CD4-positive, alpha-beta T cell (primary cell): ENCODE measurements at regions of chr15 and their contacts with region 1.

Region 1: DNA sequence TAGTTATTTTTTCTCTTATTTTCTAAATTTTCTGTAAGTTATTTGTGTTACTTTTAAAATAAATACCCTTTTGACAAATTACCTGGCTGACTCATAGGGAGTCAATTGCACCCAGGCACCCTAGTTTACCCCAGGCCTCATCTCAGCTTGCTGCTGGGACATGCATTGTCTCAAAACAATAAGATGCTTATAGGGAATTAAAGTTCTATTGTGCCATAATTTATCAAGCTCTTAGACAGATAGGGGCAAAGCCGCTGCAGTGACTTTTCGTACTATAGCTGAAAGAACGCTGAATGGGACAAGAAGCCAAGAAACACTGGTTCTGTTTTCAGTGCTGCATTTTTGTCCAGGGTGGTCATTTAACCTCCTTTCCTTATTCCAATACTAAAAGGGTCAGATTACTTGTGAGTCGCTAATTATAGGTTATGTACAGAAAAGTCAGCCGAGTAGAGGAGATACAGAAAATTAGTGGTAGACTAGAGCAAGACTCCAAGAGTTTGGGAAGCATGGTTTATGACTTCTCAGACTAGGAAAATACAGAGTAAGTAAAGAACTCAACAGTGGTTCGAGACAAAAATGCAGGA is 50.3 kb downstream of the EXD1 start:
- DNase-seq: no peak
- ATAC-seq: no peak
- H3K4me3 ChIP-seq: no peak overlapping the region
- H3K4me3 Mint-ChIP-seq: no peak overlapping the region
- H3K27ac ChIP-seq: no peak overlapping the region
- H3K27ac Mint-ChIP-seq: no peak overlapping the region
- H3K4me1 ChIP-seq: no peaks in the 10 kb centered on the region
- H3K4me1 Mint-ChIP-seq: no peaks in the 10 kb centered on the region
- H3K27me3 ChIP-seq: peaks cover 0 to 3% of the 10 kb centered on the region in 2 experiments
- H3K27me3 Mint-ChIP-seq: peaks cover 5% of the 10 kb centered on the region
- CTCF ChIP-seq: no peak

Region 2: GRCh38 chr15:40857601-40858341 is 322.5 kb before region 1 on chr15:
- CTCF ChIA-PET with region 1: interaction called, 7 read pairs
- POLR2A ChIA-PET with region 1: no interaction called
- intact Hi-C with region 1: loop called (anchors 1 to 2 kb)
- DNase-seq: peak; percentile 63 to 87 (median 77)
- ATAC-seq: peak; percentile 96
- H3K4me3 ChIP-seq: no peak overlapping the region
- H3K4me3 Mint-ChIP-seq: no peak overlapping the region
- H3K27ac ChIP-seq: no peak overlapping the region
- H3K27ac Mint-ChIP-seq: no peak overlapping the region
- H3K4me1 ChIP-seq: peaks cover 18% of the 10 kb centered on the region
- H3K4me1 Mint-ChIP-seq: peaks cover 14% of the 10 kb centered on the region
- H3K27me3 ChIP-seq: no peaks in the 10 kb centered on the region
- H3K27me3 Mint-ChIP-seq: no peaks in the 10 kb centered on the region
- CTCF ChIP-seq: peak; percentile 85

Region 3: DNA sequence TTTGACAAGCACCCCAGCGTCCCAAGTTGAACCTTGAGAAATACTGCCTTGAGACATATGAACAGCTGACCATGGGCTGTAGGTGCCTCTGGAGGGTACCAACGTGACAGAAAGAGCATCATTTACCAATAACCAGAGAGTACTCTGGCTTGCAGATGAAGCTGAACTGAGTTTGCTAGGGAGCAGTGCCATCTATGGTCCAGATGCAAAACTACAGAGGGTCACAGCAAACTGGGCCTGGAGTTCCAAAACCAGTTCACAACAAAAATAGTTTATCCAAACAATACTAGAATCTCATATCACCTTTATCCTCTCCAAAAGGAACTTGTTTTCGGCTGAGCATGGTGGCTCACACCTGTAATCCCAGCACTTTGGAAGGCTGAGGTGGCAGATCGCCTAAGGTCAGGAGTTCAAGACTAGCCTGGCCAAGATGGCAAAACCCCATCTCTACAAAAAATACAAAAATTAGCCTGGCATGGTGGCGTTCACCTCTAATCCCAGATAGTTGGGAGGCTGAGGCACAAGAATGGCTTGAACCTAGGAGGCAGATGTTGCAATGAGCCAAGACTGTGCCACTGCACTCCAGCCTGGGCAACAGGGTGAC is 157.7 kb before region 1 on chr15:
- CTCF ChIA-PET with region 1: no interaction called
- POLR2A ChIA-PET with region 1: no interaction called
- intact Hi-C with region 1: loop called in 1 of 2 experiments (anchors 10 kb)
- DNase-seq: peak in 12 of 14 experiments; percentile 2 to 69 (median 27)
- ATAC-seq: peak; percentile 66
- H3K4me3 ChIP-seq: no peak overlapping the region
- H3K4me3 Mint-ChIP-seq: no peak overlapping the region
- H3K27ac ChIP-seq: no peak overlapping the region
- H3K27ac Mint-ChIP-seq: no peak overlapping the region
- H3K4me1 ChIP-seq: no peaks in the 10 kb centered on the region
- H3K4me1 Mint-ChIP-seq: no peaks in the 10 kb centered on the region
- H3K27me3 ChIP-seq: no peaks in the 10 kb centered on the region
- H3K27me3 Mint-ChIP-seq: no peaks in the 10 kb centered on the region
- CTCF ChIP-seq: peak; percentile 59

Region 4: DNA sequence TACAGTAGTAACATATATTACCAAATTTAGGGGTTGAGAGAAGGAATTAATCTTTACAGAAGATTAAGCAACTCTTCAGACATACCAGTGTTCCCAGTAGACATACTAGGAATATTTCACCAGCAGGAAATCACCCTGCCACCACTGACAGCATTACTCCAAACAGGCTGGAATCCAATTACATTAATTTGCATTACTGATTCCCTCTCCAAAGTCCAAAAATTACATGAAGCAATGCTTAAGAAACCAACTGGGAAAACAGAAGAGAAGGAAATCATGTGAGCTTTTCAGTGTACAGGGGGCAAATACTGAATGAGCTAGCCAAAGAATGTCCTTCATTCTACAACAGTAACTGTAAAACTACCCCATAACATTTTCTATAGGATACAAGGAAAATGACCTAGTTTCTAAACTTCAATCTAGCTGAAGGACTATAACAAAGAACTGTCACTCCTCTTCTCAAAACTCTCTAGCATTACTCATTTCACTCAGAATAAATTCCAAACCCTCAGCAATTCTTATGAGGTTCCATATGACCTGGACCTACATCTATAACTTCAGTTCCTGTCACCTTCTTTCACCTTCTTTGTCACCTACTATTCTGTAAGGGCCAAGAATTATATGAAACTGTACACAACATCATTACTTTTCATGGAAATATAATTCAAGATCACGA is 136.9 kb before region 1 on chr15:
- CTCF ChIA-PET with region 1: no interaction called
- POLR2A ChIA-PET with region 1: no interaction called
- intact Hi-C with region 1: loop called in 1 of 2 experiments (anchors 5 kb)
- DNase-seq: no peak
- ATAC-seq: no peak
- H3K4me3 ChIP-seq: no peak overlapping the region
- H3K4me3 Mint-ChIP-seq: no peak overlapping the region
- H3K27ac ChIP-seq: no peak overlapping the region
- H3K27ac Mint-ChIP-seq: no peak overlapping the region
- H3K4me1 ChIP-seq: no peaks in the 10 kb centered on the region
- H3K4me1 Mint-ChIP-seq: no peaks in the 10 kb centered on the region
- H3K27me3 ChIP-seq: no peaks in the 10 kb centered on the region
- H3K27me3 Mint-ChIP-seq: no peaks in the 10 kb centered on the region
- CTCF ChIP-seq: no peak